ENCODE measurements at regions of chr1 and their contacts with region 1.

Region 1: GRCh38 chr1:169601093-169601881 is 15.0 kb upstream of the F5 start:
- DNase-seq: peak; percentile 65
- H3K4me3 Mint-ChIP-seq: no peak overlapping the region
- H3K27ac Mint-ChIP-seq: peak overlapping the region; percentile 65
- H3K4me1 Mint-ChIP-seq: peaks cover 45% of the 10 kb centered on the region
- H3K27me3 Mint-ChIP-seq: no peaks in the 10 kb centered on the region

Region 2: GRCh38 chr1:169650551-169650950 is 49.3 kb after region 1 on chr1:
- intact Hi-C with region 1: loop called (anchors 5 kb)
- DNase-seq: no peak
- H3K4me3 Mint-ChIP-seq: no peak overlapping the region
- H3K27ac Mint-ChIP-seq: no peak overlapping the region
- H3K4me1 Mint-ChIP-seq: peaks cover 21% of the 10 kb centered on the region
- H3K27me3 Mint-ChIP-seq: no peaks in the 10 kb centered on the region

Region 3: DNA sequence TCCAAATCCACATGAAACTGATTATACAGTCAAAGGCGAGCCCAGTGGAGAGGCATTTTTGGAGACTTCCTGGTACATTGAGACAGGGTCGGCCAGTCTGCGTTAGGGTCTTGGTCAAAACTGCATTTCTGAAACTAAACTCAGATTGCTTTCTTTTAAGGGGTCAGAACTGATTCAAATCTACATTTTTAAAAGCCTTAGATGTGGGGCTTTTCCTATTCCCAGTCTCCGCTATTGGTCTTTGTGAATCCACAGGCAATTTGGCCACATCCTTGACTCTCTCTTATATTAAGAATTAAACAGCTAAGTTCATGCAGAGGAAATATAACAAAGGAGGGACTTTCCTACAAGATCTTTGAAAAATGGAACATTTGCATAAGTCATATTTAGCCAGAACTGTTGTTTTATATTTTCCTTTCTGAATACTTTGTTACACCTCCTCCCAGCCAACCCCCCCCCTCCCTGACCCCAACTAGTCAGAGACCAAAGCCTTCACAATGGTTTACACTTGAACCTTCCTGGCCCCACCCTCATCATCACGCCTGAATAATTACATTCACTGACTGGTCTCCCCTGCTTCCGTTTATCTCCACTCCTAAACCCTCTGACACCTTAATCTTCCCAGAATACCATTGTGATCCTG is 79.2 kb after region 1 on chr1:
- intact Hi-C with region 1: no loop called
- DNase-seq: no peak
- H3K4me3 Mint-ChIP-seq: peak overlapping the region; percentile 52
- H3K27ac Mint-ChIP-seq: peak overlapping the region; percentile 81
- H3K4me1 Mint-ChIP-seq: peaks cover 48% of the 10 kb centered on the region
- H3K27me3 Mint-ChIP-seq: no peaks in the 10 kb centered on the region

Region 4: GRCh38 chr1:169809370-169810095 is 208.2 kb after region 1 on chr1:
- intact Hi-C with region 1: loop called (anchors 1 kb)
- DNase-seq: peak; percentile 63
- H3K4me3 Mint-ChIP-seq: no peak overlapping the region
- H3K27ac Mint-ChIP-seq: no peak overlapping the region
- H3K4me1 Mint-ChIP-seq: peaks cover 7% of the 10 kb centered on the region
- H3K27me3 Mint-ChIP-seq: no peaks in the 10 kb centered on the region

Measured in activated CD4-positive, alpha-beta T cell treated with anti-CD3 and anti-CD28 coated beads, Interleukin-2, amount 10 ng/mL, durations not matched to agents 24 days and 14 days (primary cell).